Activated CD4-positive, alpha-beta T cell treated with anti-CD3 and anti-CD28 coated beads, Interleukin-2, amount 10 ng/mL, durations not matched to agents 24 days and 14 days (primary cell): ENCODE measurements at regions of chr4 and their contacts with region 1.

Region 1: GRCh38 chr4:41887821-41888686 is 47.2 kb upstream of the TMEM33 start:
- DNase-seq: peak; percentile 77
- H3K4me3 Mint-ChIP-seq: no peak overlapping the region
- H3K27ac Mint-ChIP-seq: no peak overlapping the region
- H3K4me1 Mint-ChIP-seq: peaks cover under 1% of the 10 kb centered on the region
- H3K27me3 Mint-ChIP-seq: peaks cover 23% of the 10 kb centered on the region

Region 2: GRCh38 chr4:41281038-41281634 is 606.9 kb before region 1 on chr4:
- intact Hi-C with region 1: loop called (anchors 1 kb)
- DNase-seq: peak; percentile 81
- H3K4me3 Mint-ChIP-seq: no peak overlapping the region
- H3K27ac Mint-ChIP-seq: no peak overlapping the region
- H3K4me1 Mint-ChIP-seq: no peaks in the 10 kb centered on the region
- H3K27me3 Mint-ChIP-seq: no peaks in the 10 kb centered on the region

Region 3: DNA sequence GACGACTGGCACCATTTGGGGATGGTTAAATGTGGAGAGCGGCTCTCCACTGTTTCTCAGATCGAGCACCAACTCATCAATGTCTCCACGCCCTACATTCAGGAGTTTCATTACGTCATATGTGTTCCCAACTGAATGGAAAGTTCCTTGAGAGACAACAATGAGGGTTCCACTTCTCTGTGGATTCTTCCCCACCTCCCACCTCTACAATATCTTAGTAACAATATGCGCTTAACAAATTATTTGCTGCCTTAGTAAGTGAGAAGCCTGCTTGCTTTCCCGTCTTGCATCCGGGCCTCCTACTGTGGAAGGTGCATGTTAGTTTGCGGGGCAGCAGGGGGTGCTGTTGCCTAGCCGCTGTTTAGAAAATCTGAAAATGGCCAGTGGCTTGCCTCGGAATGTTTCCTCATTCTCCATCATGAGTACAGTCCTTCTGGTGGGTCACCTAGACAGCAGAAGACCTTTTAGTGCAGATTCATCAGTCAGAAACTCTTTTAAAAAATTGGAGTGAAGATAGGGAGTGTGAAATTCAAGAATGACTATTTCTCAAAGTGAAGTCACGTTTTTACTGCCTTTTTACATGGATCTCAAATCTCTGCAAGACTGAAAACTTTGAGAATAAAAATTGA is 195.2 kb before region 1 on chr4:
- intact Hi-C with region 1: loop called (anchors 1 kb)
- DNase-seq: peak; percentile 73
- H3K4me3 Mint-ChIP-seq: no peak overlapping the region
- H3K27ac Mint-ChIP-seq: no peak overlapping the region
- H3K4me1 Mint-ChIP-seq: no peaks in the 10 kb centered on the region
- H3K27me3 Mint-ChIP-seq: no peaks in the 10 kb centered on the region

Region 4: DNA sequence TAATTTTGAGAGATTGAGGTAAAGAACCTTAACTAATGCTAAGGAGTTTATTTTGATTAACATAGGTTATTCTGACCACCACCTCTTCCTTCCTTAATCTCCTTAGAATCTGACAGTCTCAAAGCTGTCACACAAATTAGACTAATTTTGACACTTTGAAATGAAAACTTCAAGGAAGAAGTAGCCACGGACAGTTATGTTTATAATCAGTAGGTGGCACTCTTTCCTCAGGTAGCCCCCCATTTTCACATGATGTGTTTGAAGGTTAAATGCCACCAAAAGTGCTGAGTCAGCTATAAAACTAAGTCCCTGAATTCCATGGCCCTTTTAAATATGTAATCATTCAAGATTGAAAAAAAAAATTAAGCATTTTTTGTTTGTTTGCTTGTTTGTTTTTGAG is 69.6 kb after region 1 on chr4:
- intact Hi-C with region 1: no loop called
- DNase-seq: no peak
- H3K4me3 Mint-ChIP-seq: no peak overlapping the region
- H3K27ac Mint-ChIP-seq: no peak overlapping the region
- H3K4me1 Mint-ChIP-seq: no peaks in the 10 kb centered on the region
- H3K27me3 Mint-ChIP-seq: no peaks in the 10 kb centered on the region